Ascending aorta (tissue), 2 donors: ENCODE measurements at regions of chr5 and their contacts with region 1.

Region 1: GRCh38 chr5:135271533-135272310 is 127.3 kb downstream of the MACROH2A1 start:
- DNase-seq: no peak
- H3K4me3 ChIP-seq: no peak overlapping the region
- H3K27ac ChIP-seq: no peak overlapping the region
- H3K4me1 ChIP-seq: peaks cover 6 to 12% of the 10 kb centered on the region in 2 donors
- H3K27me3 ChIP-seq: no peaks in the 10 kb centered on the region
- CTCF ChIP-seq: no peak

Region 2: DNA sequence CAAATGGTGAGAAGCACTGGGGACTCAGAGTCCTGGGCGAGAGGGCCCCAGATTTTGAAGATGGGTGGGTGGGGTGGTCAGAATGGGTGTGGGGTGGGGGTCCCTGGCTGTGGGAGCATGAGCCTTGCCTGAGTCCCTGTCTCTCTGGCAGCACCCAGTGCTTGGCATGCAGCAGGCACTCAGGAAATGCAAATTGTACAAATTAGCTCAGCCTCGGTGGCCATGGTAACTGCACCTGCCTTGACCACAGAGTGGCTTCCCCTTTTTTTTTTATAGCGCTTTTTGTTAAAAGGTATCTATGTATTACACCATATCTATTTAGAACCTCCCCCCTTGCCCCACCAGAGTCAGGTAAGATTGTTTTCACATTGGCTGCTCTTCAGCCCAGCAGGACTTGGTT is 218.4 kb before region 1 on chr5:
- intact Hi-C with region 1: no loop called
- DNase-seq: no peak
- H3K4me3 ChIP-seq: no peak overlapping the region
- H3K27ac ChIP-seq: no peak overlapping the region
- H3K4me1 ChIP-seq: peaks cover 3 to 6% of the 10 kb centered on the region in 2 donors
- H3K27me3 ChIP-seq: no peaks in the 10 kb centered on the region
- CTCF ChIP-seq: no peak

Region 3: GRCh38 chr5:135191084-135191826 is 80.5 kb before region 1 on chr5:
- intact Hi-C with region 1: loop called (anchors 5 kb)
- DNase-seq: peak in 1 of 2 donors; percentile 84
- H3K4me3 ChIP-seq: peak overlapping the region; percentile 66 to 71
- H3K27ac ChIP-seq: no peak overlapping the region
- H3K4me1 ChIP-seq: peaks cover 3 to 9% of the 10 kb centered on the region in 2 donors
- H3K27me3 ChIP-seq: no peaks in the 10 kb centered on the region
- CTCF ChIP-seq: peak; percentile 84 to 98 (median 93)

Region 4: DNA sequence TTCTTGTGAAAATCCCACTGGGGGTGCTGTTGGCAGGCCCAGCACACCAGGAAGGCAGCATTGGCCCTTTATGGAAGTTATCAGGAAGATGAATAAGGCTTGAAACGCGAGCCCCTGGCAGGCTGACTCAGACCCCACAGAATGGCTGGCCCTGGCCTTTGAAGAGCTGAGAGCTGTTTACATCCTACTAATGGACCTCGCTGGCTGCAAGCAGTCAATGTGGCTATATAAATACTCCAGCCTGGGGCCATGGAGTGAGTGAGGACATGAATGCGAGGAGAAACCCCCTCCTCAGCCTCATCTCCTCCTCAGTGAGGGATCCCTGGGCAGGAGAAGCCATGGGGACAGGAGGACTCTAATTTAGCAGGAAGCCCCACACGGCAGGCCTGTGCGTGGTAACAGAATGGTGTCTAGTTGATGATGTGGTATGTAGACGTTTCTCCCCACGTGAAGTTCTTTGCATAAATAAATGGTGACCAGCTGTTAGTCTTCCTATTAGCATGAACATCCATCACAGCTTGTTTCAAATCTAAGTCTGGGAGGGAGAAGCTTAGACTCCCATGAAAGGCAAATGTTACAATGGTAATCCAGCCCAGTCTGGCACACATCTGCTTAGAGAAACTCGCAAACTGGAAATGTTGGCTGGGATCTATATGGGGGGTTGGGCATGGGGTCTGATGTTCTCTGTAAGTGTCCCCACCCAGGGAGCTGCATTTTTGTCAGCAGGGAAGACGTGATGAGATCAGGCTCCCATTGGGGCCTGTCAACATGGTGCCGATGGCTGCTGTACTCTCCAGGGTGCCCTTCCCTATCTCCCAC is 62.6 kb before region 1 on chr5:
- intact Hi-C with region 1: loop called (anchors 1 kb)
- DNase-seq: peak; percentile 67 to 92
- H3K4me3 ChIP-seq: no peak overlapping the region
- H3K27ac ChIP-seq: peak overlapping the region; percentile 72 to 84
- H3K4me1 ChIP-seq: peaks cover 11 to 33% of the 10 kb centered on the region in 2 donors
- H3K27me3 ChIP-seq: no peaks in the 10 kb centered on the region
- CTCF ChIP-seq: peak in 1 of 3 experiments; percentile 30